ENCODE measurements at regions of chr4 and their contacts with region 1.

Region 1: GRCh38 chr4:163332500-163333406 is at the start of gene NPY1R:
- DNase-seq: peak; percentile 58 to 73
- ATAC-seq: peak; percentile 94 to 97
- H3K4me3 ChIP-seq: peak within 1 kb of the TSS; percentile 56
- H3K27ac ChIP-seq: no peak within 1 kb of the TSS
- H3K4me1 ChIP-seq: peaks cover 6% of the 10 kb centered on the region; the same call in 1 of the 3 replicates
- CTCF ChIP-seq: peak; percentile 61
- EP300 ChIP-seq: no peak
- POLR2A ChIP-seq: no peak
- RAD21 ChIP-seq: peak; percentile 59 to 73
- polyA plus RNA-seq, gene NPY1R: 0.23 and 0.30 TPM in 2 replicates

Region 2: DNA sequence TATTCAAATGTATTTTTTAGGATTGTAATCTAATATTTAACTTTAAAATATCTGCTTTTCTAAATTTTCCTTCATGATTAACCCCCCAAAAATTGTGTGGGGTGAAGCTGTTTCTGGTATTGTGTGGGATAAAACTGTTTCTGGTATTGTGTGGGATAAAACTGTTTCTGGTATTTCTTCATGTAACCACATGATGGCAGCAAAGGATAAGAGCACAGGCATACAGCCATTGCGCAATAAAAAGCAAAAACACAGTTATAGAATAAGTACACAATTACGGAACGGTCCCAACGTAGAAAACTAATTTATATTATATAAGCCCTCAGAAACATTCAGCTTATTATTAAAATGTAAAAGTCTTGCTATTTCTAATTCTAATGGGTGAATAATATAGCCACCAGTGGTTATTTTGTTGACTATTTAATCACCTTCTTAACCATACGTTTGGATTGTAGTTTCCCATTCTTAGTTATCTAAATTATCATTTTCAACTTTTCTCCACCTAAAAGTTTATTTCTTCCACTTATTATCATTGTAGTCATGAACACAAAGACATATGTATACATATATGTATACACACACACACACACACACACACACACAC is 835.1 kb before region 1 on chr4:
- CTCF ChIA-PET with region 1: interaction called, 12 read pairs
- POLR2A ChIA-PET with region 1: no interaction called
- DNase-seq: peak; percentile 5 to 26
- ATAC-seq: peak in 1 of 2 experiments; percentile 66; a peak in 2 of 6 replicates
- H3K4me3 ChIP-seq: no peak overlapping the region
- H3K27ac ChIP-seq: no peak overlapping the region
- H3K4me1 ChIP-seq: no peaks in the 10 kb centered on the region
- CTCF ChIP-seq: peak; percentile 85
- EP300 ChIP-seq: no peak
- POLR2A ChIP-seq: no peak
- RAD21 ChIP-seq: peak; percentile 90 to 95

Region 3: DNA sequence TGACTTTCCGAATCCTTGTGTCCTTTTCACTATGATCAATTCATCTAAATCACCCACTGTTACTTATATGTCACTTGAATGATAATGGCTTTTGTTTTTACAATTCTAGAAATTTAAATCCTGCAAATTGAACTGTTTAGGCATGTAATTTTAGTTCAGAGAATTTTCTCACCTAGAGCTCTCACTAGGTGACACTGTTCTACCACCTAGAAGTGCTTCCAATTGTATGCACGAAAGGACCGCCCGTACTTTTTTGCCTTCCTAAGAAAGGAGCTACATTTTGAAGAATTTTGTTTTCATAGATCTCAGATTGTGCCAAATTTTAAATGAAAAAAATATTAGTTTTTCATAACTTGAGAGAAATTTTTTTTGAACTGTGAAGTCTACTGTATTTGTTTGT is 687.4 kb before region 1 on chr4:
- CTCF ChIA-PET with region 1: interaction called, 15 read pairs
- POLR2A ChIA-PET with region 1: no interaction called
- DNase-seq: peak in 1 of 2 experiments; percentile 23
- ATAC-seq: peak in 1 of 2 experiments; percentile 56; a peak in 2 of 6 replicates
- H3K4me3 ChIP-seq: no peak overlapping the region
- H3K27ac ChIP-seq: no peak overlapping the region
- H3K4me1 ChIP-seq: no peaks in the 10 kb centered on the region
- CTCF ChIP-seq: peak; percentile 53
- EP300 ChIP-seq: no peak
- POLR2A ChIP-seq: no peak
- RAD21 ChIP-seq: peak; percentile 69 to 75

Region 4: DNA sequence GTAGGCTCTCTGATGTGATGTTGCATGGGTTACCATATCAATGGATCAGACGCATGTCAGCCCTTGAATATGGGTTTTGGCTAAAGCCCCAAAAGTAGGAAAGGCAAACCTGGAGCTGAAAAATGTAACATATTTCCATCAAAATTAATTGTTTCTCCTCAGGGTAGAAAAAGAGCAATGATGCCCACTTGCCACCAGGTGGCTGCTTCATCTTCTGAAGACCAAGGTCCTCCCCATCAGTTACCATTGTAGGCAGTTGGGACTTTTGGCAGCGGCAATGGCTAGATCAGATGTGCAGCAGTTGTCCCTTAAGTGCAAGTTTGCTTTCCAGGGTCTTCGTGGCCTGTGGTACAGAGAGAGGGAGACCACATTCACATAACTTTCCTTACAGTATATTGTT is 284.3 kb before region 1 on chr4:
- CTCF ChIA-PET with region 1: interaction called, 10 read pairs
- POLR2A ChIA-PET with region 1: no interaction called
- DNase-seq: peak; percentile 31 to 36
- ATAC-seq: peak; percentile 78 to 82; a peak in 5 of 6 replicates
- H3K4me3 ChIP-seq: no peak overlapping the region
- H3K27ac ChIP-seq: no peak overlapping the region
- H3K4me1 ChIP-seq: no peaks in the 10 kb centered on the region
- CTCF ChIP-seq: peak; percentile 37
- EP300 ChIP-seq: no peak
- POLR2A ChIP-seq: no peak
- RAD21 ChIP-seq: peak; percentile 47 to 53

Region 5: DNA sequence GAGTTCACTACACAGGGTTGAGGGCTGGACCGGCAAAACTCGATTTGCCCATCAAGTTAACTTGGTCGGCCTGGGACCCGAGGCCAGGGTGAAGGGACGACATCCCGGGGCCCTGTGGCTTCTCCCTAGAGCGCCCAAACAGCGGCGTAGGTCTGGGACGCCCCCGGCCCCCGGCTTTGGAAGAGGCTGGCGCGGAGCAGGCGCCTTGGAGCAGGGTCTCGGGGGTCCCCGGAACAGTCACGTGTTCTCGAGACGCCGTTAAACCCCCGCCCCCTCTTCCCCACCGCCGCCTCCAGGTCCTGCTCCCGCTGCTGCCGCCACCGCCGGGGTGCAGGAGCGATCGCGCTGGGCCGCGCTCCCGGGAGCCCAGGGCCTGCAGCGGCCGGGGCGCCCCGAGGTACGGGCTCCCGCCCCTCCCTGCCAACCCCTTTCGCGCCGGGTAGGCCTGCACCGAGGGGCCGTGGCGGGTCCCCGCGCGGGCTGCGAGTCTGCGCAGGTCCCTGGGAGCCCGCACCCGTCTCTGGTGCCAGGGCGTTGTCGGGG is 10.9 kb after region 1 on chr4 and contains the start of gene NPY5R:
- CTCF ChIA-PET with region 1: interaction called, 15 read pairs
- POLR2A ChIA-PET with region 1: no interaction called
- DNase-seq: no peak
- ATAC-seq: peak; percentile 74 to 80; a peak in 5 of 6 replicates
- H3K4me3 ChIP-seq: peak within 1 kb of the TSS; percentile 36
- H3K27ac ChIP-seq: no peak within 1 kb of the TSS
- H3K4me1 ChIP-seq: peaks cover 7% of the 10 kb centered on the region; the same call in 1 of the 3 replicates
- CTCF ChIP-seq: no peak
- EP300 ChIP-seq: no peak
- POLR2A ChIP-seq: no peak
- RAD21 ChIP-seq: no peak
- polyA plus RNA-seq, gene NPY5R: 0.11 and 0.13 TPM in 2 replicates

Region 6: GRCh38 chr4:163598028-163598427 is 265.3 kb after region 1 on chr4:
- CTCF ChIA-PET with region 1: no interaction called
- POLR2A ChIA-PET with region 1: no interaction called
- DNase-seq: no peak
- ATAC-seq: no peak
- H3K4me3 ChIP-seq: no peak overlapping the region
- H3K27ac ChIP-seq: no peak overlapping the region
- H3K4me1 ChIP-seq: no peaks in the 10 kb centered on the region
- CTCF ChIP-seq: no peak
- EP300 ChIP-seq: no peak
- POLR2A ChIP-seq: no peak
- RAD21 ChIP-seq: no peak